Panc1 (cell line): ENCODE measurements at regions of chr19 and their contacts with region 1.

Region 1: GRCh38 chr19:41144403-41144802 is 30.2 kb downstream of the CYP2F1 start:
- DNase-seq: peak; percentile 51
- ATAC-seq: peak; percentile 83; the same call in 1 of the 2 replicates
- H3K4me3 ChIP-seq: no peak overlapping the region
- H3K27ac ChIP-seq: no peak overlapping the region
- H3K4me1 ChIP-seq: no peaks in the 10 kb centered on the region
- H3K27me3 ChIP-seq: no peaks in the 10 kb centered on the region
- CTCF ChIP-seq: peak; percentile 88

Region 2: DNA sequence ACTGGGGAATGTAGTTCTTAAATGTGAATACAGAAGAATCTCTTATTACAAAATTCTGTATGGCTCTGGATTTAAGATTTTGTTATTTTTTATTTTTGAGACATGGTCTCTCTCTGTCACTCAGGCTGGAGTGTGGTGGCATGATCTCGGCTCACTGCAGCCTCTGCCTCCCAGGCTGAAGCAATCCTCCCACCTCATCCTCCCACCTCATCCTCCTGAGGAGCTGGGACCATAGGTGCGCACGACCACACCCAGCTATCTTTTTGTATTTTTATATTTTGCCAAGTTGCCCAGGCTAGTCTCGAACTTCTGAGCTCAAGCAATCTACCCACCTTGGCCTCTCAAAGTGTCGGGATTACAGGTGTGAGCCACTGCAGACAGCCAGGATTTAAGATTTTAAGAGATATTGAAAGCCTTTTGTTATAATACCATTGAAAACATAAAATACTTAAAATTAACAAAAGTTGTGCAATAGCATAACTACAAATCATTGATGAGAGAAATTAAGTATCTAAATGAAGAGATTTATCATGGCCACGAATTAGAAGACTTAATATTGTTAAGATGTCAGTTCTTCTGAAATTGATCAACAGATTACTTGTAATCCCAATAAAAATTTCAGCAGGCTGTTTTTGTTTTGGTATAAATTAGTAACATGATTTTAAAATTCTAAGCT is 307.5 kb before region 1 on chr19:
- CTCF ChIA-PET with region 1: no interaction called
- POLR2A ChIA-PET with region 1: interaction called, 10 read pairs
- in situ Hi-C with region 1: no loop called
- intact Hi-C with region 1: no loop called
- DNase-seq: no peak
- ATAC-seq: no peak
- H3K4me3 ChIP-seq: no peak overlapping the region
- H3K27ac ChIP-seq: no peak overlapping the region
- H3K4me1 ChIP-seq: no peaks in the 10 kb centered on the region
- H3K27me3 ChIP-seq: no peaks in the 10 kb centered on the region
- CTCF ChIP-seq: no peak

Region 3: GRCh38 chr19:40982594-40983101 is 161.8 kb before region 1 on chr19:
- CTCF ChIA-PET with region 1: no interaction called
- POLR2A ChIA-PET with region 1: no interaction called
- in situ Hi-C with region 1: no loop called
- intact Hi-C with region 1: loop called (anchors 10 kb)
- DNase-seq: no peak
- ATAC-seq: no peak
- H3K4me3 ChIP-seq: no peak overlapping the region
- H3K27ac ChIP-seq: 0 out of 2 replicates have a peak overlapping the region, but pooled peaks have one; percentile 7
- H3K4me1 ChIP-seq: no peaks in the 10 kb centered on the region
- H3K27me3 ChIP-seq: no peaks in the 10 kb centered on the region
- CTCF ChIP-seq: no peak